Activated CD4-positive, alpha-beta T cell treated with anti-CD3 and anti-CD28 coated beads for 36 hours (primary cell): ENCODE measurements at regions of chr2 and their contacts with region 1.

Region 1: GRCh38 chr2:224946895-224947294 is 95.4 kb downstream of the DOCK10 start:
- DNase-seq: no peak
- ATAC-seq: peak; percentile 63
- H3K4me3 Mint-ChIP-seq: peak overlapping the region; percentile 79
- H3K27ac Mint-ChIP-seq: peak overlapping the region; percentile 91
- H3K4me1 Mint-ChIP-seq: peaks cover 61% of the 10 kb centered on the region
- H3K27me3 Mint-ChIP-seq: no peaks in the 10 kb centered on the region

Region 2: DNA sequence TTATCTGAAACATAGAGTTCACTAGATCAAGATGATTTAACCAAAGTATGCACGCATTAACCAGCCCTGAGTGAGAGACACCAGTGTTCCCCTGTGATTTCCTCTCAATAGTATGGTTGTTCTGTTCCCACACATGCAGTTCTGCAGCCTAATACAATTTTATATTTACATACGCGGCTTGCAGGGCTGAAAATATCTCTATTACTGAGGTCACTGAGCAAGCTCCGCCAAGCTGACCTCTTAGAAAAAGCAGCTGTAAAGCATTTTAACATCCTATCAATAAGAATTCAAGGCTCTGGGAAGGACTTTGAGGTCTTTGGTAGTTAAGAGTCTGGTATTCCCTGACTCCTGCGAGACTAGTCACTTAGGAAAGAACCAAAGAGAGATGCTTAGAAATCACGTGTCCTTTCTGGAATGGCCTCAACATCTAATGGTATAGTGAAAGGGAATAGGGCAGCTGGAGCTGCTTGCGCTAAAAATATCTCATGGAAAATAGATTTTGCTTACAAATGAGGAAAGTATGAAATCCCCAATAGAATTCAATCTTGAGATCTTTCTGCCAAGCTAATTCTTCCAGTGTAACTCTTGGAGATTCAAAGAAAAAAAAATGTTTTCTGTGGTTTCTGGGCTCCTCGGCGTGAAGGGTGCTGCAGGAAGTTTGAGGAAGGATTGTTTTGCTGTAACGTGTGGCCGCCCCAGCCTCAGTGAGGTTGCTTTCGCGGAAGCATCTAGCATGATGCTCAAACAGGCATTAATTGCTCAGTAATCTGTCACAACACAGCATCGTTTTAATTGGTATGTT is 36.2 kb after region 1 on chr2:
- CTCF ChIA-PET with region 1: no interaction called
- POLR2A ChIA-PET with region 1: no interaction called
- intact Hi-C with region 1: loop called (anchors 5 kb)
- DNase-seq: peak; percentile 55
- ATAC-seq: peak; percentile 39
- H3K4me3 Mint-ChIP-seq: peak overlapping the region; percentile 34
- H3K27ac Mint-ChIP-seq: peak overlapping the region; percentile 92
- H3K4me1 Mint-ChIP-seq: peaks cover 78% of the 10 kb centered on the region
- H3K27me3 Mint-ChIP-seq: no peaks in the 10 kb centered on the region